ENCODE measurements at regions of chr17 and their contacts with region 1.

Region 1: DNA sequence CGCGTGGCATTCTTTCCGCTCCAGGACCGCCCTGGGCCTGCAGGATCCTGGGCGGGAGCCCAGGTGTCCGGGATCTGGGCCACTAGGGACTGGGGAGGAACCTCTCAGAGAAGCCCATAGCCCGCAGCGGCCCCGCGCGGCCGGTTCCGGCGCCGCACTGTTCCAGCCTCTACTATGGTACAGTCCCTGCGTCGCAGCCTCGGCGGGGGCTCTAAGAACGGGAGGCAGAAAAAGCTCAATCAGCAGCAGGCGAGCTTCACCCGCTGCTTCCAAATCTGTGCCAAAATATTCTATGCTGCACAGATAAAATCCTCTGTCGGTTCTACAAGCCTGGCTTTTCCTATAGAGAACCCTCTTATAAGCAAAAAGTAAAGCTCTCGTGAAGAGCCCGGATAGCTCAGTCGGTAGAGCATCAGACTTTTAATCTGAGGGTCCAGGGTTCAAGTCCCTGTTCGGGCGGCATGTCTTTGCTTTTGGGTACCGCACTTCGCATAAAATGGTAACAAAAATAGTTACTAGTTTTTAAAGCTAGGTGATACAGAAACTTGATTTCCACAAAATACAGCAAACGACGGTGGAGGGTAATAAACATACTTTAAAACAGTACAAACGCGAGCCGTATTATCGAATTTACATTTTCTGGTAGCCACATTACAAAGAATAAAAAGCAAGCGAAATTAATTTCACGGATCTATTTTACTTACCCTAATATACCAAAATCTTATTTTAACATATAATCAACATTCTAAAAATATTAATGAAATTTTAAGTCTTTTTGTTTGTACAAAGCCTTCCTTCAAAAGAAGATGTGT is 661 bp upstream of the ALOXE3 start:
- DNase-seq: peak; percentile 64 to 89 (median 80)
- ATAC-seq: peak; percentile 66 to 77 (median 72)
- H3K4me3 ChIP-seq: peak overlapping the region; percentile 73 to 99
- H3K4me3 Mint-ChIP-seq: peak overlapping the region; percentile 88 to 91 (median 89)
- H3K27ac ChIP-seq: peak overlapping the region; percentile 51
- H3K27ac Mint-ChIP-seq: peak overlapping the region; percentile 95
- H3K4me1 ChIP-seq: peaks cover 44 to 62% of the 10 kb centered on the region in 2 experiments
- H3K4me1 Mint-ChIP-seq: peaks cover 54 to 62% (median 60%) of the 10 kb centered on the region in 3 donors
- H3K27me3 ChIP-seq: peaks cover 8 to 75% of the 10 kb centered on the region in 2 experiments
- H3K27me3 Mint-ChIP-seq: peaks cover 37 to 69% of the 10 kb centered on the region in 2 donors

Region 2: GRCh38 chr17:7915611-7916382 is 203.2 kb before region 1 on chr17 and contains the start of gene RNF227:
- CTCF ChIA-PET with region 1: interaction called, 3 to 4 read pairs
- POLR2A ChIA-PET with region 1: interaction called in 1 of 2 experiments, 12 read pairs
- DNase-seq: peak; percentile 50 to 91 (median 68)
- ATAC-seq: peak; percentile 81 to 82 (median 82)
- H3K4me3 ChIP-seq: peak within 1 kb of the TSS; percentile 65 to 77
- H3K4me3 Mint-ChIP-seq: peak within 1 kb of the TSS; percentile 83 to 92 (median 91)
- H3K27ac ChIP-seq: peak within 1 kb of the TSS; percentile 85
- H3K27ac Mint-ChIP-seq: peak within 1 kb of the TSS; percentile 90 to 94
- H3K4me1 ChIP-seq: peaks cover 18 to 21% of the 10 kb centered on the region in 2 experiments
- H3K4me1 Mint-ChIP-seq: peaks cover 27 to 36% (median 32%) of the 10 kb centered on the region in 3 donors
- H3K27me3 ChIP-seq: no peaks in the 10 kb centered on the region
- H3K27me3 Mint-ChIP-seq: no peaks in the 10 kb centered on the region
- total RNA-seq, gene RNF227: 2.9 to 7.3 (median 5.2) TPM

Region 3: GRCh38 chr17:8079291-8080207 is 39.4 kb before region 1 on chr17:
- CTCF ChIA-PET with region 1: interaction called, 4 to 11 read pairs
- POLR2A ChIA-PET with region 1: no interaction called
- DNase-seq: peak; percentile 47 to 89 (median 70)
- ATAC-seq: peak; percentile 83 to 87 (median 84)
- H3K4me3 ChIP-seq: peak overlapping the region; percentile 70 to 71
- H3K4me3 Mint-ChIP-seq: peak overlapping the region; percentile 85 to 91 (median 87)
- H3K27ac ChIP-seq: peak overlapping the region; percentile 65
- H3K27ac Mint-ChIP-seq: peak overlapping the region; percentile 59 to 84
- H3K4me1 ChIP-seq: peaks cover 2 to 19% of the 10 kb centered on the region in 2 experiments
- H3K4me1 Mint-ChIP-seq: peaks cover 14 to 22% (median 20%) of the 10 kb centered on the region in 3 donors
- H3K27me3 ChIP-seq: peaks cover 6 to 35% of the 10 kb centered on the region in 2 experiments
- H3K27me3 Mint-ChIP-seq: peaks cover 6 to 11% of the 10 kb centered on the region in 2 donors

Region 4: DNA sequence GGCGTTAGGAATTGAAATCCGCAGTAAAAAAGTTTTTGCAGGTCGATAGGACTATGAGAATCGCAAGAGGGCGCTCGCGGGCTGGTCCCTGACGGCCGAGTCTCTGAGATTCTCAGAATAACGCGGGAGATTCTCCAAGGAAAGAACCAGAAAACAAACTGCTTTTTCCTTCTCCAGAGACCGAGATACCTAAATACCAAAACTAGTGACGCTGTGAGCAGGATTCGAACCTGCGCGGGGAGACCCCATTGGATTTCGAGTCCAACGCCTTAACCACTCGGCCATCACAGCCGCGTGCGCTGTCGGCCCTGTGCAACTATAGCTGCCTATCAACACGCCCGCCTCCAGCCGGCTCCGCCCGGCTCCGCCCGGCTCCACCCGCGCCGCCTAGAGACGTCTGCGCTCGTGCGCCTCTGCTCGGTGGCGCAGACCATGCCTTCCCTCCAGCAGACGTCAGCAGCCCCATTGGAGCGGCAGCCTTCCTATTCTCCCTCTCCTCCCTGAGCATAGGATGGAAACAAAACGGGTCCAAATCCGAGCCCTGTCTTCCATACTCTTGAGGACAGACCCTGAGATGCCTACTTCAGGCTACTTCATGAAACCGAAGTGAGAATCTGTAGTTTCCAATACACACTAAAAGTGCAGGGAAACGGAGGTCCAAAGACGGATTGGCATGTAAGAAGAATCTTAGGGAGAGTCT is 19.8 kb after region 1 on chr17:
- CTCF ChIA-PET with region 1: interaction called, 3 to 23 read pairs
- POLR2A ChIA-PET with region 1: interaction called in 1 of 2 experiments, 3 read pairs
- DNase-seq: peak; percentile 89 to 98 (median 94)
- ATAC-seq: peak; percentile 80 to 97 (median 94)
- H3K4me3 ChIP-seq: peak overlapping the region; percentile 68 to 74
- H3K4me3 Mint-ChIP-seq: no peak overlapping the region
- H3K27ac ChIP-seq: peak overlapping the region; percentile 97
- H3K27ac Mint-ChIP-seq: no peak overlapping the region
- H3K4me1 ChIP-seq: peaks cover 10 to 28% of the 10 kb centered on the region in 2 experiments
- H3K4me1 Mint-ChIP-seq: peaks cover 0 to 12% (median 2%) of the 10 kb centered on the region in 3 donors
- H3K27me3 ChIP-seq: peaks cover 0 to 3% of the 10 kb centered on the region in 2 experiments
- H3K27me3 Mint-ChIP-seq: no peaks in the 10 kb centered on the region

Region 5: GRCh38 chr17:8189711-8190477 is 70.9 kb after region 1 on chr17 and contains the start of gene BORCS6:
- CTCF ChIA-PET with region 1: interaction called in 1 of 2 experiments, 23 read pairs
- POLR2A ChIA-PET with region 1: interaction called in 1 of 2 experiments, 3 read pairs
- DNase-seq: peak; percentile 78 to 98 (median 95)
- ATAC-seq: peak; percentile 70 to 75 (median 72)
- H3K4me3 ChIP-seq: peak within 1 kb of the TSS; percentile 74 to 77
- H3K4me3 Mint-ChIP-seq: no peak within 1 kb of the TSS
- H3K27ac ChIP-seq: peak within 1 kb of the TSS; percentile 89
- H3K27ac Mint-ChIP-seq: peak within 1 kb of the TSS; percentile 91 to 93
- H3K4me1 ChIP-seq: peaks cover 28 to 68% of the 10 kb centered on the region in 2 experiments
- H3K4me1 Mint-ChIP-seq: peaks cover 0 to 13% (median 11%) of the 10 kb centered on the region in 3 donors
- H3K27me3 ChIP-seq: no peaks in the 10 kb centered on the region
- H3K27me3 Mint-ChIP-seq: no peaks in the 10 kb centered on the region
- total RNA-seq, gene BORCS6: 6.7 to 21.3 (median 17.2) TPM

Region 6: GRCh38 chr17:8268550-8269298 is 149.7 kb after region 1 on chr17:
- CTCF ChIA-PET with region 1: no interaction called
- POLR2A ChIA-PET with region 1: no interaction called
- DNase-seq: no peak
- ATAC-seq: no peak
- H3K4me3 ChIP-seq: no peak overlapping the region
- H3K4me3 Mint-ChIP-seq: no peak overlapping the region
- H3K27ac ChIP-seq: no peak overlapping the region
- H3K27ac Mint-ChIP-seq: no peak overlapping the region
- H3K4me1 ChIP-seq: no peaks in the 10 kb centered on the region
- H3K4me1 Mint-ChIP-seq: no peaks in the 10 kb centered on the region
- H3K27me3 ChIP-seq: no peaks in the 10 kb centered on the region
- H3K27me3 Mint-ChIP-seq: no peaks in the 10 kb centered on the region

Measured in T-cell (primary cell).